SK-N-SH (cell line): ENCODE measurements at regions of chr19 and their contacts with region 1.

Region 1: GRCh38 chr19:14073261-14073924 is 807 bp downstream of the MISP3 start:
- DNase-seq: peak; percentile 92
- H3K4me3 ChIP-seq: peak overlapping the region; percentile 60 to 85
- H3K27ac ChIP-seq: peak overlapping the region; percentile 24 to 50; a peak in 3 of 4 replicates
- H3K4me1 ChIP-seq: peaks cover 0 to 14% of the 10 kb centered on the region in 2 experiments; a peak in 1 of 4 replicates
- H3K27me3 ChIP-seq: no peaks in the 10 kb centered on the region
- CTCF ChIP-seq: peak; percentile 38
- EP300 ChIP-seq: no peak
- RAD21 ChIP-seq: no peak

Region 2: GRCh38 chr19:13938301-13939064 is 134.9 kb before region 1 on chr19 and contains the start of gene PODNL1:
- CTCF ChIA-PET with region 1: interaction called, 15 read pairs
- POLR2A ChIA-PET with region 1: interaction called, 3 read pairs
- DNase-seq: peak; percentile 86
- H3K4me3 ChIP-seq: peak within 1 kb of the TSS; percentile 24 to 57
- H3K27ac ChIP-seq: peak within 1 kb of the TSS; percentile 29 to 86; a peak in 3 of 4 replicates
- H3K4me1 ChIP-seq: peaks cover 0 to 26% of the 10 kb centered on the region in 2 experiments; a peak in 1 of 4 replicates
- H3K27me3 ChIP-seq: no peaks in the 10 kb centered on the region
- CTCF ChIP-seq: no peak
- EP300 ChIP-seq: peak in 1 of 2 experiments; percentile 24; a peak in 1 of 4 replicates
- RAD21 ChIP-seq: peak; percentile 24; the same call in 1 of the 2 replicates
- polyA plus RNA-seq, gene PODNL1: 4.2 and 7.5 TPM in 2 replicates

Region 3: GRCh38 chr19:14031719-14032480 is 41.5 kb before region 1 on chr19 and contains the start of gene IL27RA:
- CTCF ChIA-PET with region 1: interaction called, 11 read pairs
- POLR2A ChIA-PET with region 1: interaction called, 3 read pairs
- DNase-seq: peak; percentile 87
- H3K4me3 ChIP-seq: peak within 1 kb of the TSS; percentile 60 to 80
- H3K27ac ChIP-seq: peak within 1 kb of the TSS in 1 of 2 experiments; percentile 40; a peak in 3 of 4 replicates
- H3K4me1 ChIP-seq: peaks cover 0 to 3% of the 10 kb centered on the region in 2 experiments; a peak in 1 of 4 replicates
- H3K27me3 ChIP-seq: no peaks in the 10 kb centered on the region
- CTCF ChIP-seq: peak; percentile 70
- EP300 ChIP-seq: no peak
- RAD21 ChIP-seq: peak; percentile 61
- polyA plus RNA-seq, gene IL27RA: 9.3 TPM in 2 replicates

Region 4: DNA sequence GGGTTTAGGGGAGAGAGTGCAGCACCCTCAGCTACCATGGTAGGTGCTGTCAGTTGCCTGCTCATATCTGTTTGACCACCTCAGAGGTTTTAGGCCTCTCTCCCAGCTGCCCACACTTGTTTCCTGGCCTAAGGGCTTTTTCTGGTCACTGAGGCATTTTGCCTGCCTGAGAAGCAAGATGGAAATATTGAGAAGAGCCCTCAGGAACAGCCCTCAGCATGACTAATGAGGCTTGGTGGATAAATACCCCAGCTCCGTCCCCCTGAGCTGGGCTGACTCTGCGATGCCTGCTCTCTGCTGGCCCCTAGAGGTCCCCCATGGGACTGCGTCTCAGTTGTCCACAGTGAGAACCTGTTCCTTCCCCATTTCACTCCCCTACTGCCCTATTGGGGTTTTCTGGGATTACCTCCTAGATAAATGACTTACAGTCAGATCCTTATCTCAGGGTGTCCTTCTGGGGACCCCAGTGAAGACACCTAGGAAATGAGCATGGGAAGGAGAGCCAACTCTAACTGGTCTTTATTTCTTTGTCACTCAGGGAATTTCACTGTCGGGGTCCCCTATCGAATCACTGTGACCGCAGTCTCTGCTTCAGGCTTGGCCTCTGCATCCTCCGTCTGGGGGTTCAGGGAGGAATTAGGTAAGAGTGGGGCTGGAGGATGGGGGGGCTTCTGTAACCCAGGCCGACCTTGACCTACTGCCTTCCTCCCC is 24.8 kb before region 1 on chr19:
- CTCF ChIA-PET with region 1: interaction called, 29 read pairs
- POLR2A ChIA-PET with region 1: interaction called, 6 read pairs
- DNase-seq: peak; percentile 83
- H3K4me3 ChIP-seq: no peak overlapping the region
- H3K27ac ChIP-seq: no peak overlapping the region
- H3K4me1 ChIP-seq: no peaks in the 10 kb centered on the region
- H3K27me3 ChIP-seq: no peaks in the 10 kb centered on the region
- CTCF ChIP-seq: peak; percentile 79
- EP300 ChIP-seq: no peak
- RAD21 ChIP-seq: peak; percentile 52

Region 5: GRCh38 chr19:14091081-14091812 is 17.9 kb after region 1 on chr19:
- CTCF ChIA-PET with region 1: interaction called, 18 read pairs
- POLR2A ChIA-PET with region 1: no interaction called
- DNase-seq: peak; percentile 93
- H3K4me3 ChIP-seq: peak overlapping the region; percentile 79 to 91
- H3K27ac ChIP-seq: peak overlapping the region; percentile 67 to 92; a peak in 3 of 4 replicates
- H3K4me1 ChIP-seq: peaks cover 0 to 10% of the 10 kb centered on the region in 2 experiments; a peak in 1 of 4 replicates
- H3K27me3 ChIP-seq: no peaks in the 10 kb centered on the region
- CTCF ChIP-seq: peak; percentile 55
- EP300 ChIP-seq: no peak; a peak in 1 of 4 replicates
- RAD21 ChIP-seq: no peak

Region 6: DNA sequence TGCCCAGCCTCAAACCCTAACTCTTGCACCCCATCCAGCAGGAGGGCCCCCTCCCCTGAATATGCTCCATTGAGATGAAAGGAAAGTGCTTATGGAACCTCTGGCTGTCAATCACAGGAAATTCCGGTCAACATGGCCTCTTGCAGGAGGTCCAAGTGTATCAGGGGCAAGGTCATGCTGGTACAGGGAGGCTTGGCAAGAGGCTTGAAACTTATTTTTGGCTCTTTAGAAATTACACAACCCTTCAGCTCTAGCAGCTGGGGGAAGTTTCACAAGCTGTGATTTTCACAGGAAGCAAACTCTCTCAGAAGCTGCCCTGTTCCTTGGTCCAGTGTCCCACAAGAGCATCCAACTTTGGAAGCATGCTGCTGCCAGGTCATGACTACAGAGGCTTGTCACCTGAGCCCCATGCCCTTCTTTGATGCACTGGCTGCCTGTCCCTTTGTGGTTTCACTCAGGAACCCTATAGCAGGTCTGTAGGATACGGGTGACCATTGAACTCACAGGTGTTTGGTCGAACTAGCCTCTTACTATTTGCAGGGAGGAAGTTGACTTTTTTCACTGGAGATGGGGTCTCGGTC is 54.6 kb after region 1 on chr19:
- CTCF ChIA-PET with region 1: no interaction called
- POLR2A ChIA-PET with region 1: no interaction called
- DNase-seq: no peak
- H3K4me3 ChIP-seq: no peak overlapping the region
- H3K27ac ChIP-seq: no peak overlapping the region
- H3K4me1 ChIP-seq: no peaks in the 10 kb centered on the region
- H3K27me3 ChIP-seq: no peaks in the 10 kb centered on the region
- CTCF ChIP-seq: no peak
- EP300 ChIP-seq: no peak
- RAD21 ChIP-seq: no peak

Region 7: DNA sequence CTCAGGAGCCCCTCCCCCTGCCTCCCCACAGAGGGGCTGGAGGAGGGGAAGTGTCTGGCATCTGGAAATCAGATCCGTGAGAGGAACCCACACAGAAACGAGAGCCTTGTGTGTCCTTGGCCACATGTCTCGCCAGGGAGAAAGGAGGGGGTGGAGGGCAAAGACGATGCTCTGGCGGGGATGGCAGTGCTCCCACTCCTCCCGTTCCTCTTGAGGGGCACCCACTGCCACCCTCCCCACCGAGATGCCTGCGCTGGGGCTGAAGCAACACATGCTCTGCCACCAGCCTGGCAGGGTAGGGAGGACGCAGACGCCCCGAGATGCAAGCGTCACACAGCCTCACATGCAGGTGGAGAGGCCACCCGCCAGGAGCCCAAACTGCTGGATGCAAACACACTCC is 129.8 kb after region 1 on chr19:
- CTCF ChIA-PET with region 1: no interaction called
- POLR2A ChIA-PET with region 1: no interaction called
- DNase-seq: no peak
- H3K4me3 ChIP-seq: no peak overlapping the region
- H3K27ac ChIP-seq: no peak overlapping the region; a peak in 1 of 4 replicates
- H3K4me1 ChIP-seq: peaks cover 0 to 7% of the 10 kb centered on the region in 2 experiments; a peak in 1 of 4 replicates
- H3K27me3 ChIP-seq: no peaks in the 10 kb centered on the region
- CTCF ChIP-seq: no peak
- EP300 ChIP-seq: no peak
- RAD21 ChIP-seq: no peak